GM23248 (cell line): ENCODE measurements at regions of chr11 and their contacts with region 1.

Region 1: DNA sequence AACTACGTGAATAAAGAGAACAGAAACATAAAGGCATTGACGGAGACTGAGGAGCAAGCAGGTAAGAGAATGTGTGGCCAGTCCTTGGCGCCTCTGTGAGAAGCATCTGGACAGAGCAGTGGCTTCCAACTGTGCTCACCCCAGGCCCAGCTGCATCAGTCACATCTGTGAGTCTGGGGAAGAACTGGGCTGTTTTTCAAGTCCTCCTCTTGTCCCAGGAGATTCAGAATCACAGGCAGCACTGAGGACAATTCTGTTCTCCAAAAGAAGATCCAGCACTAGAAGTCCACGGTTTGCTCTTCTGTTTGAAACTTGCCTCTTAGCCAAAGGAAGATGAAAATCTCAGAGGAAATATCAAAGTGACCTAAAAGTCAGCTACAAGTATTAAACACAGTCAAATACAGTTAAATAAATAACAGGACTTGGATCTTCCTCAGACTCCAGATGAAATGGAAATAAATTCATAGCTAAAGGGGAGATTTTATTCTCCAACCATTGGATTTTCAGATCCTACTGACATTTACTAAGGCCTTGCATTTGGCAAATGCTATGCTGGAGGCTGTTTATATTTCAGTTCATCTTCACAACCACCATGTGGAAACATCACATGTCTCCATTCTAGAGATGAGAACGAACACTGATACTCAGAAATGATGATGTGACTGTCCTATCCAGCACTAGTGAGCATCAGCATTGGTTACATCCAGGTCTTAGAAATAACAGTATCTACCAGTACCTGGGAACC is 14.1 kb downstream of the FAM181B start:
- DNase-seq: no peak
- H3K4me3 ChIP-seq: no peak overlapping the region
- H3K27ac ChIP-seq: no peak overlapping the region
- H3K4me1 ChIP-seq: peaks cover 6% of the 10 kb centered on the region; the same call in 1 of the 2 replicates
- H3K27me3 ChIP-seq: no peaks in the 10 kb centered on the region

Region 2: DNA sequence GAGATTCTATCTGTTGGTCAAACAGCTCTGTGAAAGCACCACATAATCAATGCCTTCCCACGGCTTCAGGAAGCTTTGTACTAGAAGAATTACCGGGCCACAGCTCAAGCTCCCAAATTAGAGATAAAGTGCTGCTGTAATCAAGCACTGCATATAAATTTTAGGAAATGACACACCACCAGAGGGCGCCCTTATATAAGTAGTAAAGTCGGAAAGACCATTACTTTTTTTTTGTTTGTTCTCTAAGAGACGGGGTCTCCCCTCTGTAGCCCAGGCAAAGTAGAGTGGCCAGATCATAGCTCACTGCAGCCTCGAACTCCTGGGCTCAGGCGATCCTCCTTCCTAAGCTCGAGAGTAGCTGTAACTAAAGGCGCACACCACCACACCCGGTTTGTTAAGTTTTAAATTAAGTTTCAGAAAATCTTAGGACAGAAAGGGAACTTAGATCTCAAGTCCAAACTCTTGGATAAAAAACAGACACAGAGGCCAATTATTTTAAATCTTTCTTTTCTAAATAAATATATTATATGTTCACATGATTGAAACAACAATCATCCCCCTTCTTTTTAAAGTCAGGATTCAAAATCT is 148.1 kb after region 1 on chr11:
- in situ Hi-C with region 1: loop called (anchors 10 kb)
- DNase-seq: peak; percentile 85
- H3K4me3 ChIP-seq: peak overlapping the region; percentile 68
- H3K27ac ChIP-seq: no peak overlapping the region
- H3K4me1 ChIP-seq: peaks cover 19% of the 10 kb centered on the region
- H3K27me3 ChIP-seq: no peaks in the 10 kb centered on the region

Region 3: GRCh38 chr11:83063073-83063754 is 343.7 kb after region 1 on chr11:
- in situ Hi-C with region 1: no loop called
- DNase-seq: peak; percentile 68
- H3K4me3 ChIP-seq: peak overlapping the region; percentile 45; the same call in 1 of the 2 replicates
- H3K27ac ChIP-seq: peak overlapping the region; percentile 8; the same call in 1 of the 2 replicates
- H3K4me1 ChIP-seq: peaks cover 10% of the 10 kb centered on the region
- H3K27me3 ChIP-seq: no peaks in the 10 kb centered on the region

Region 4: GRCh38 chr11:83187465-83187864 is 467.9 kb after region 1 on chr11:
- in situ Hi-C with region 1: no loop called
- DNase-seq: no peak
- H3K4me3 ChIP-seq: no peak overlapping the region
- H3K27ac ChIP-seq: no peak overlapping the region
- H3K4me1 ChIP-seq: peaks cover 13% of the 10 kb centered on the region
- H3K27me3 ChIP-seq: no peaks in the 10 kb centered on the region